ENCODE measurements at regions of chr6 and their contacts with region 1.

Region 1: GRCh38 chr6:144215932-144216667 is 65.8 kb downstream of the STX11 start:
- DNase-seq: peak; percentile 95

Region 2: DNA sequence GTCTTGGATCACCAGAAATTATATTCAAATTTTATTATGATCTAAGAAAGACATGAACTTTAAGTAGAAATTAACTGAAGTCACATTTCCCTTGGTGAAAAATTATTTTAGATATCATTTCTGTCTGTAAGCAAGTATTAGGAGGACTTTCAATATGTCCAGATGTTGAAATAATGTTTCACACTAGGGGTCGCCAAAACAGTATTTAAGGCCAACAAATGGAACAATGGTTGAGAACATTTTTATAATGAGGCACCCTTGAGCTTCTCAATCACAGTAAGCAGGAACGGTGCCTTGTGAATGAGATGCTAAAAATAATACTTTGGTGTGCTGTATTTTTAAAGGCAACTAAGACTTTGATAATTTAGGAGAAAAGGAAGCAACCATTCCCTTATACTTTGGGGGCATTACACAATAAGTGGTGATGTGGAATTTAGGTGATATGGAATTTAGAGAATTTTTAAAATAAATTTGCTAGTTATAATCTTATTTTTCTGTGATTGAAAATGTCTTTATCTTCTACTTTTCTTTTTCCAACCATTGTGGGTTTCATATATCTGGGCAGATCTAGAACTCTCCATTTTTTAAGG is 111.1 kb before region 1 on chr6:
- intact Hi-C with region 1: loop called (anchors 1 kb)
- DNase-seq: no peak

Region 3: DNA sequence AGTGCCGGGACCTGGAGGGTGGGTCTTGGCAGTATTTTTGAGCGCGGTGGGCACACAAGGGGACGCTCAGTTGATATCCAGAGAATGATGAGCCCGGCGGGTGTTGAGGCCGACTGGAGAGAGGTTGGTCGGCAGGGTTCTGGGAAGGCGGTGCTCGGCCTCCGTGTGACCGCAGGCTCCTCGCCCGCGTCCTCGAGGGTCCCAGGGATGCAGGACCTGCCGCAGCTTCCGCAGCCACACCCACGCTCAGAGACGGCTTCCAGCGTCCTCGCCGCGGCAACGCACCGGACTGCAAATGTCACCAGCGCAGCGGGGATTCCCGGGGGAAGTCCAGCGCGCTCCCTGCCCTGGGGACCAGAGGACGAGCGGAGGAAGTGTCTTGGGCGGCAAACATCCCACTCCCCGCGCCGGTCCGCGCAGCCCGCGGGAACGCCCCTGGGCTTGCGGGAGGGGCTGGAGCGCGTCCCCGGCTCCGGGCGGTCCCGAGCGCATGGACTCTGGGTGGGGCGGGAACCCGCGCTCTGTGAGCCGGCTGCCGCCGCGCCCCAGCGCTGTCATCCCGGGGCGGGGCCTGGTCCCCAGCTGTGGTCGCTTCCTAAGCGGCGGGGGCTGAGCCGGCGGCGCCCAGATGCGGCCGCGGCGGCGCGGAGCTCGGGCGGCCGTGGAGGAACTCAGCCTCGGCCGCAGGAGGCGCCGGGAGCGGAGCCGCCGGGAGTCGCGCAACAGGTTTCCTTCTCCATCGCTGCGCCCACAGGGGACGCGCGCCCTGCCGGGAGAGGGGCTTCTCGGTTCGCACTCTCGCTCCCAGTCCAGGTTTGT is 66.0 kb before region 1 on chr6 and contains the start of gene STX11:
- intact Hi-C with region 1: loop called (anchors 1 kb)
- DNase-seq: peak; percentile 93
- total RNA-seq, gene STX11: 8.8 TPM

Region 4: GRCh38 chr6:144162977-144163376 is 53.1 kb before region 1 on chr6:
- intact Hi-C with region 1: no loop called
- DNase-seq: no peak

Region 5: DNA sequence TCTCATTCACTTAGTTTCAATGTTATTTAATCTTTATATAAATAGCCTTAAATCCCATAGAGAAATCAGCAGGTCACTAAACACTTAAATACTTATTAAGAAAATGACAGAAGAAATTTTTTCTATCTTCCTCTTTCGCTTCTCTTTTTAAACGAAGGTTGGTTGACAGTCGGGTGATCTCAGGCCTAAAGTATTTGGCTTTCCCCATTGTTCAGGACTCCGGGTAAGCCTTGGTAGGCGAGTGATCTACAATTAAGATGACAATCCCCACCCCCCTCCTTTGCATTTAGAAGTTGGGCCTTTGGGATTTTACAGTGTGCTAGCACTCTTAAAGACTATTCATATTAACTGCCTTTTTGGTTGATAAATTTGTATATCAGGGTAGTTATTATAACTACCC is 49.3 kb after region 1 on chr6:
- intact Hi-C with region 1: loop called (anchors 2 kb)
- DNase-seq: no peak

Region 6: DNA sequence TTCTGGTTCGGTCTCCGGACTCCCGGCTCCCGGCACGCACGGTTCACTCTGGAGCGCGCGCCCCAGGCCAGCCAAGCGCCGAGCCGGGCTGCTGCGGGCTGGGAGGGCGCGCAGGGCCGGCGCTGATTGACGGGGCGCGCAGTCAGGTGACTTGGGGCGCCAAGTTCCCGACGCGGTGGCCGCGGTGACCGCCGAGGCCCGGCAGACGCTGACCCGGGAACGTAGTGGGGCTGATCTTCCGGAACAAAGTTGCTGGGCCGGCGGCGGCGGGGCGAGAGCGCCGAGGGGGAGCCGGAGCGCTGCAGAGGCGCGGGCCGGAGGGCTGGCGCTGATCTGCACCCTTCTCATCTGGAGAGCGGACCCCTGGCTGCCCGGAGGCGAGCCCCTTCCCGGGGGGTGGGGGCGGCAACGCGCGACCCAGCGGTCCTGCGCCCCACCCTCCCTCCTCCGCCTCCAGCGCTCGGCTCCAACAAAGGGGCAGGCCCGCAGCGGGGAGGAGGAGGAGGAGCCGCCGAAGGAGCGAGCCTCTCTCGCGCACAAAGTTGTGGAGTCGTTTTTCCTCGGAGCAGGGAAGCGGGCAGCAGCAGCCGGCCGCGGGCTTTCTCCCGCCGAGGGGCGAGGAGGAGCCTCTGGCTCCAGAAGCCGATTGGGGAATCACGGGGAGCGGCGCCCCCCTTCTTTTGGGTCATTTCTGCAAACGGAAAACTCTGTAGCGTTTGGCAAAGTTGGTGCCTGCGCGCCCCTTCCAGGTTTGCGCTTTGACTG is 68.9 kb after region 1 on chr6 and contains the start of gene UTRN:
- intact Hi-C with region 1: loop called (anchors 1 kb)
- DNase-seq: peak; percentile 90
- total RNA-seq, gene UTRN: 96.4 TPM

Region 7: DNA sequence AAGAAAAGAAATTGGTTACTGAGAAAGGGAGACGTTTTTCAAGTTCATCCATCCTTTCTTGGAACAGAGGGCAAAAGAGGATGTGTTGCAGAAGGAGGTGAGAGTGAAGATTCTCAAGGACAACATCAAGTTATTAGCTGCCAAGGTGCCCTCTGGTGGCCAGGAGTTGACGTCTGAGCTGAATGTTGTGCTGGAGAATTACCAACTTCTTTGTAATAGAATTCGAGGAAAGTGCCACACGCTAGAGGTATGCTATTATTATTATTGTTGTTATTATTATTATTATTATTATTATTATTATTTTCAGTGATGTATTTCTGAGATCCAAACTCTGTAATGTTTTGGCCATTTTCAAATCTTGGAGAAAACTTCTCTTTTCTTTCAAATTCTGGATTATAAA is 266.0 kb after region 1 on chr6:
- intact Hi-C with region 1: loop called (anchors 2 kb)
- DNase-seq: no peak

Measured in cardiac septum (tissue), 1 donor.